ENCODE measurements at regions of chr6 and their contacts with region 1.

Region 1: GRCh38 chr6:139134817-139135581 is at the start of gene HECA:
- DNase-seq: peak; percentile 99
- ATAC-seq: peak; percentile 73
- H3K4me3 Mint-ChIP-seq: peak within 1 kb of the TSS; percentile 95
- H3K27ac Mint-ChIP-seq: peak within 1 kb of the TSS; percentile 98
- H3K4me1 Mint-ChIP-seq: peaks cover 79% of the 10 kb centered on the region
- H3K27me3 Mint-ChIP-seq: no peaks in the 10 kb centered on the region
- CTCF ChIP-seq: no peak
- total RNA-seq, gene HECA: 34.9 and 38.3 TPM in 2 replicates

Region 2: DNA sequence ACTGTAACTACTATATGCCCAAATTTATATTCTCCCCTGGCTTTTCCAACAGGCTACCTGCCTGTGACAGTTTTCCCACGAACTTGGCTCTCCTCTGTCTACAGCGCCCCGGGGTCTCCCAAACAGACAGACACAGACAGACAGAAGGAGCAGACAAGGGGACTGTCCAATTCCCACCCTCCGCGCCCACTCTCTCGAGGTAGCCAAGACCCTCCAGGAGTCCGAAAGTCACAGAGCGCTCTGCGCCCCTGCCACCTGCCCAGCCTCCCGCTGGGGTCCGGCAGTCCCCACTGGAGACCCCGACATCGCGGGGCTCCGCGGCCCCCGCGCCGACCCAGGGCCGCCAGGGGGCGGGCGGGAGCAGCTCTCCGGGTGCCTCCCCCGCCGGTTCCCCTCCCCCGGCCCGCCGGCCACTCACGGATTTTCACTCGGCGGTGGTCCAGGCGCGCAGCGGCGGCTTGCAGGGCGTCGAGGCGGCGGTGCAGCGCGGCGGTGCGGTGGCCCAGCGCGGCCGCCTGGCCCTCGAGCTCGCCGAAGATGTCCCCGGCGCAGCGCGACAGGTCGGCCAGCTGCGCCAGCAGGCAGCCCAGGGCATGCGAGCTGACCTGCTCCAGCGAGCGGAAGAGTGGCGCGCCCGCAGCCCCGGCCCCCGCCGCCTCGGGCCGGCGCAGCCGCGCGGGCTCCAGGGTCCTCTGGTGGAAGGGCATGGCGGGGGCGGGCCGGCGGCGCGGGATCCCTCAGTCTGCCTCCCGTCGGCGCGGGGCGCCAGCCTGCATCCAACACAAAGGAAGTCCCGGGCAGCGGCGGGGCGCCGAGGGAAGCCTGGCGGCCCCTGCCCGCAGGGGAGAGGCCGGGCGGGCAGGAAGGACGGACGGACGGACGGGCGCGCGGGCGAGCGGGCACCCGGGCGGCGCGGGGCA is 442.7 kb before region 1 on chr6:
- CTCF ChIA-PET with region 1: no interaction called
- POLR2A ChIA-PET with region 1: no interaction called
- intact Hi-C with region 1: loop called (anchors 10 kb)
- DNase-seq: peak; percentile 75
- ATAC-seq: peak; percentile 79
- H3K4me3 Mint-ChIP-seq: peak overlapping the region; percentile 87
- H3K27ac Mint-ChIP-seq: no peak overlapping the region
- H3K4me1 Mint-ChIP-seq: peaks cover 11% of the 10 kb centered on the region
- H3K27me3 Mint-ChIP-seq: peaks cover 31% of the 10 kb centered on the region
- CTCF ChIP-seq: peak; percentile 63

Region 3: GRCh38 chr6:138817822-138818308 is 317.1 kb before region 1 on chr6:
- CTCF ChIA-PET with region 1: interaction called, 4 read pairs
- POLR2A ChIA-PET with region 1: no interaction called
- intact Hi-C with region 1: loop called (anchors 5 kb)
- DNase-seq: no peak
- ATAC-seq: no peak
- H3K4me3 Mint-ChIP-seq: no peak overlapping the region
- H3K27ac Mint-ChIP-seq: peak overlapping the region; percentile 70
- H3K4me1 Mint-ChIP-seq: peaks cover 32% of the 10 kb centered on the region
- H3K27me3 Mint-ChIP-seq: no peaks in the 10 kb centered on the region
- CTCF ChIP-seq: no peak

Region 4: GRCh38 chr6:139114746-139115145 is 20.3 kb before region 1 on chr6:
- CTCF ChIA-PET with region 1: no interaction called
- POLR2A ChIA-PET with region 1: interaction called, 4 read pairs
- intact Hi-C with region 1: loop called (anchors 1 kb)
- DNase-seq: no peak
- ATAC-seq: no peak
- H3K4me3 Mint-ChIP-seq: no peak overlapping the region
- H3K27ac Mint-ChIP-seq: no peak overlapping the region
- H3K4me1 Mint-ChIP-seq: no peaks in the 10 kb centered on the region
- H3K27me3 Mint-ChIP-seq: no peaks in the 10 kb centered on the region
- CTCF ChIP-seq: no peak

Region 5: DNA sequence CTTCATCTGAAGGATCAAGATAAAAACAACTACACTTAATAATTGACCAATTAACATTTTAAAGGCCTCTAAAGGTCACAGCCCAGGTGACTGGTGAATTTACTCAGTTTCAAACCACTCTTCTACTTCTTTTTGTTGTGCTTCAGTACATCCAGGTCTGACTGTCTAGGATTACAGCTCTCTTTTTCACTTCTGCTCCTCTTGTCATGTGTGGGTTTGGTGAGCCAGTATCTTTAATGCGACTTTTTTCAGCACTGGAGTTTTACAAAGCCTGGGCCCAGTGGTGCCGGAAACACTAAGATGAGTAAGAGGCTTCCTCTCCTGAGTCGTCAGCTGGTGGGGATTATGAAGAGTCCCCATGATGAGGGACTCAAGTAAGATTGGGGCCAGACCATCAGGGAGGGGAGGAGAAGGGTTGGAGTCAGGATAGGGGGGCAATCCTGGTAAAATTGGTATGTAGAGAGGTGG is 26.9 kb after region 1 on chr6:
- CTCF ChIA-PET with region 1: interaction called, 4 read pairs
- POLR2A ChIA-PET with region 1: interaction called, 14 read pairs
- intact Hi-C with region 1: loop called (anchors 1 kb)
- DNase-seq: peak; percentile 36
- ATAC-seq: peak; percentile 95
- H3K4me3 Mint-ChIP-seq: peak overlapping the region; percentile 66
- H3K27ac Mint-ChIP-seq: peak overlapping the region; percentile 94
- H3K4me1 Mint-ChIP-seq: peaks cover 77% of the 10 kb centered on the region
- H3K27me3 Mint-ChIP-seq: no peaks in the 10 kb centered on the region
- CTCF ChIP-seq: no peak

Region 6: DNA sequence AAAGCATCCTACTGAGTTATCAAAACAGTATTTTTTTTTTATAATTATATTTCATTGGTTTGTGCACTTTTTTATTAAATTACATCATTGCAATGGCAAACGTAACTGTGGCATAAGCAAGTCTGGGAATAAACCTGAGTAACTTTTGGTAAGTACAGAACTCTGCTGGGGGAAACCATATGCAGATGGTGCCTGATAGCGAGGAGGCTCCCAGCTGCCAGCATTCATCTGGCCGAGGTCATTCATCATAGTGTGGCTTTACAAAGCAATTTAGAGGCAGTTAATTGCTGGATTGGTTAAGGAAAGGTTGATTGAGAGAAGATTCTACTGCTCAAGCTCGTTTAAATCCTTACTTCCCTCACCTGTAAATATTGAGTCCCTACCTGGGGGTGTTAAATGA is 52.5 kb after region 1 on chr6:
- CTCF ChIA-PET with region 1: no interaction called
- POLR2A ChIA-PET with region 1: no interaction called
- intact Hi-C with region 1: no loop called
- DNase-seq: no peak
- ATAC-seq: no peak
- H3K4me3 Mint-ChIP-seq: no peak overlapping the region
- H3K27ac Mint-ChIP-seq: no peak overlapping the region
- H3K4me1 Mint-ChIP-seq: peaks cover 10% of the 10 kb centered on the region
- H3K27me3 Mint-ChIP-seq: no peaks in the 10 kb centered on the region
- CTCF ChIP-seq: no peak

Region 7: GRCh38 chr6:139369568-139370282 is 234.7 kb after region 1 on chr6:
- CTCF ChIA-PET with region 1: interaction called, 11 read pairs
- POLR2A ChIA-PET with region 1: interaction called, 38 read pairs
- intact Hi-C with region 1: loop called (anchors 1 kb)
- DNase-seq: no peak
- ATAC-seq: no peak
- H3K4me3 Mint-ChIP-seq: no peak overlapping the region
- H3K27ac Mint-ChIP-seq: peak overlapping the region; percentile 4
- H3K4me1 Mint-ChIP-seq: peaks cover 27% of the 10 kb centered on the region
- H3K27me3 Mint-ChIP-seq: no peaks in the 10 kb centered on the region
- CTCF ChIP-seq: no peak

Region 8: DNA sequence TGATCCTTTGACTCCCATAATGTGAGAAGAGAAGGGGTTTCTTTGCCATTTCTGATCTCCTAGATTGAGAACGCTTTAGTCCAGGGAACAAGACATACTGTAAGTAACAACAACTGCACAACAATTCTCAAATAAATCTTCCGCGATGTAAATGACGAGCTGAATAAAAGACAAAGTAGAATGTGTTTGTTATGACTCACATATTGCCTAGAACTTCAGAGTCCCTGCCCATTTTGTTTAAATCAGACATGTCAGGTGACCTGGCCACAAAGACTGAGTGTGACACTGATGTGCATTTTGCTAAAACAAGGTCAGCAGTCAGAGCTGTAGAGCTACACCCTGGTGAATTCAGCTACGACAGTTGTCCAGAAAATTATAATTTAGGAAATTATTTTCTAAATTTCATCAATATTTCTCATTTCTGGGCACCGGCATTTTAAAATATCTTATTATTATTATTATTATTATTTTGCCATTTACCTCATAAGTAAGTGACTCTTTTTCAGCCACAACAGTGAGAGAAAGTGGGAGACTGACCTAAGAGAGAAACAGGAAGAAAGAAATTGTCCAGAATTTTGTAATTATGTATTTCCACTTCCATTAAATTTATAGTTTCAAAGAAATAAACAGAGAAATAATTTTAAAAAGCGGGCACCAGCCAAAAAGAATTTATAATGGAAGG is 396.3 kb after region 1 on chr6:
- CTCF ChIA-PET with region 1: no interaction called
- POLR2A ChIA-PET with region 1: no interaction called
- intact Hi-C with region 1: no loop called
- DNase-seq: no peak
- ATAC-seq: no peak
- H3K4me3 Mint-ChIP-seq: no peak overlapping the region
- H3K27ac Mint-ChIP-seq: no peak overlapping the region
- H3K4me1 Mint-ChIP-seq: peaks cover 3% of the 10 kb centered on the region
- H3K27me3 Mint-ChIP-seq: no peaks in the 10 kb centered on the region
- CTCF ChIP-seq: no peak